ENCODE measurements at regions of chr1 and their contacts with region 1.

Region 1: GRCh38 chr1:23959461-23960290 is at the start of gene PNRC2:
- DNase-seq: peak; percentile 91
- H3K4me3 ChIP-seq: peak within 1 kb of the TSS; percentile 82
- CTCF ChIP-seq: no peak

Region 2: DNA sequence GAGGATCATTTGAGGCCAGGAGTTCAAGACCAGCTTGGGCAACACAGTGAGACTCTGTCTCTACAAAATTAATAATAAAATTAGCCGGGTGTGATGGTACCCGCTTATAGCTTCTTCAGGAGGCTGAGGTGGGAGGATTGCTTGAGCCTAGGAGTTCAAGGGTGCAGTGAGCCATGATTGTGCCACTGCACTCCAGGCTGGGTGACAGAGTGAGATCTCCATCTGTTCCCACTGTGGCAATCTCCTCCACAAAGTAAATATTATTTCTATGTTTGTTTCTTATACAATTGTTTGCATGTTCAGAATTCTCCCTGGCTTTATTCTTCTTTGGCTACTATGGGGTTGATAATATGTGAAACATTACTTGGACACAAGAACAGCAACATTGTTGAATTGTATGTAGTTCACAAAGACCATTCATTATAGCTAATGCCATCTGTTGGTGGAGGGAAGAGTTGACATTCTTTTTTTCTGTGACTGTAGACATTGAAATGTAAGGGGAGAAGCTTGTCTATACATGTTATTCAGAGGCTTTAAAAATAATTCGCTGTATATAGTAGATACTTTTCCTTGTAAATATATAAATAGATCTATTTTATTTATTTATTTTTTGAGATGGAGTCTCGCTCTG is 68.3 kb after region 1 on chr1:
- in situ Hi-C with region 1: loop called (anchors 10 kb)
- DNase-seq: peak; percentile 38
- H3K4me3 ChIP-seq: no peak overlapping the region
- CTCF ChIP-seq: peak; percentile 42

Region 3: GRCh38 chr1:24085546-24085945 is 125.9 kb after region 1 on chr1:
- in situ Hi-C with region 1: loop called (anchors 10 kb)
- DNase-seq: peak; percentile 5
- H3K4me3 ChIP-seq: no peak overlapping the region
- CTCF ChIP-seq: no peak

Region 4: DNA sequence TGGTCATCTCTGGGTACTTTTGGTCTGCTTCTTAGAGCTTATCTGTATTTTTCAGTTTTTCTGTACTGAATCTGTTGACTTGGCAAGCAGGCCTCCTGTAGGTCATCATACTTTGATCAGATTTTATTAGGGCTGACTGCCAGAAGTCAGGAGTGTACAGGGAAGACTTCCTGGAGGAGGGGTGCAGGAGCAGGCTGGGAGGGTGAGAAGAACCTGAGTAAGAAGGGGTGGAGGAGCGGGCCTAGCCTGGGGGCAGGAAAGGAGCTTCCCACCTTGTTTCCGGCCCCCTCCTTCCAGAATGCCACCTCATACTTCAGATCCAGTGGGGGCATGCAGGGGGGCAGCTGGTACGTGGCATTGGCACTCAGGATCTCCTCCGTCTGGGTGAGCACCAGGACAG is 201.6 kb after region 1 on chr1:
- in situ Hi-C with region 1: no loop called
- DNase-seq: no peak
- H3K4me3 ChIP-seq: no peak overlapping the region
- CTCF ChIP-seq: no peak

Measured in astrocyte of the cerebellum (primary cell).